ENCODE measurements at regions of chr3 and their contacts with region 1.

Region 1: DNA sequence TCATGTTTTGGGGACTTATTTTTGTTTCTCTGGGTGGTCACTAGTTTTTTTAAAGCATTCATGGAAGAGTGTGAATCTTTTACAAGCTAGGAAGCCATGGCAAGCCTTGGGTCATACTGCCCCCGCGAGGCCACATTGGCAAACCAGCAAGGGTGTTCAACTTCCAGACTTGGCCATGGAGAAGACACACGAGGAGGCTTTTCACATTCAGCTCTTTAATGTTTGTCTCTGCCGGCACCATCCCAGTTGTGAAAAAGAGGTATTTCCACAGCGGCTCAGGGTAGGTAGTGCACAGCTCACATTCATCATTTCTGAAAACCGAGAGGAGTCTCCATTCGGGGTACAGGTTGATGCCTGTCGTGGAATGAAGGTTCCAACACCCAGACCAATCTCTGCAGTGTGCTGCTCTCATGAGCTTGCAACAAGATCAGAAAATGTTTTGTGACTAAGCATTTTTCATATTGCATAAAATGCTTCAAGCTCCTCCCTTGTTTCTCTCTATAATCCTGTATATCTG is 7.7 kb downstream of the CCR5 start:
- DNase-seq: peak; percentile 83
- ATAC-seq: peak; percentile 93
- H3K4me3 ChIP-seq: no peak overlapping the region
- H3K27ac ChIP-seq: no peak overlapping the region
- H3K4me1 ChIP-seq: peaks cover 10% of the 10 kb centered on the region
- H3K27me3 ChIP-seq: no peaks in the 10 kb centered on the region
- CTCF ChIP-seq: peak; percentile 97

Region 2: DNA sequence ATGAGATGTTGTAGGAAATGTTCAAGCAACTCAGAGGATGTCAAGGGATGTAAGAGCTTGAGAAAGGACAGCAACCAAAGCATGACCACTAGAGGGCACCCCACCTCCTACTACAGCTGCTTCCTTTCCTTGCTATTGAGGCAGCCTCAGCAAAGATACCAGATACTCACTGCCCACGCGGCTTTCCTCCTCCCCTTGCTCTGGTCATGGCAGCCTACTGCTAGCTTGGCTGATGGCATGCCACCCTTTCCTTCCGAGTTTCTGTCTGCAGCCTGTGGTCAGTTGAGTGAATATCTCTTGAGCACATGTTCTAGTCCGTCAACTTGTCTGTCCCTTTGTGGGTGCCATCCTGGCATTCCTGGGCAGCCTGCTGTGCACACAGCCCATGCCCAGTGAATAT is 439.6 kb before region 1 on chr3:
- CTCF ChIA-PET with region 1: interaction called, 4 read pairs
- POLR2A ChIA-PET with region 1: no interaction called
- intact Hi-C with region 1: loop called (anchors 2 kb)
- DNase-seq: peak; percentile 89
- ATAC-seq: peak; percentile 84
- H3K4me3 ChIP-seq: no peak overlapping the region
- H3K27ac ChIP-seq: no peak overlapping the region
- H3K4me1 ChIP-seq: peaks cover 14% of the 10 kb centered on the region
- H3K27me3 ChIP-seq: no peaks in the 10 kb centered on the region
- CTCF ChIP-seq: peak; percentile 92

Region 3: GRCh38 chr3:46087871-46088270 is 290.6 kb before region 1 on chr3:
- CTCF ChIA-PET with region 1: interaction called, 7 read pairs
- POLR2A ChIA-PET with region 1: no interaction called
- intact Hi-C with region 1: loop called (anchors 1 kb)
- DNase-seq: peak; percentile 68
- ATAC-seq: peak; percentile 62
- H3K4me3 ChIP-seq: no peak overlapping the region
- H3K27ac ChIP-seq: no peak overlapping the region
- H3K4me1 ChIP-seq: peaks cover 36% of the 10 kb centered on the region
- H3K27me3 ChIP-seq: no peaks in the 10 kb centered on the region
- CTCF ChIP-seq: peak; percentile 69

Region 4: DNA sequence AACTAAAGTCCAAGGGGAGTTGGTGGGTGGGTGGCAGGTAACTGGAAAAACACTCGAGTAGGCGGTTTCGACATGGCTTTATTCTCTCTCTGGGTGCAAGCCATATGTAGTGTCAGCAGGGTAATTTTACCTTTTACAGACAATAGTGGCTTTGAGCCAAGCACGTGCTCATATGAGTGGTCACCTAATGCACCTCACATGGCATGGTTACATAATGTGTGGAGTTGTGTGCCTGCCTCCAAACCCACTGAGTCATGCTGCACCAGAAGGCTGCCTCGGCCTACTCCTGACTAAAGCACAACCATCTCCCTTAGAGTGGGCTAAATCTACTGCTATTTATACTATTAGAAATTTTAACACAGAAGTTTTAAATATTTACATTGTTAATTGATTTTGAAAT is 45.1 kb after region 1 on chr3:
- CTCF ChIA-PET with region 1: interaction called, 3 read pairs
- POLR2A ChIA-PET with region 1: no interaction called
- intact Hi-C with region 1: loop called (anchors 2 kb)
- DNase-seq: peak; percentile 73
- ATAC-seq: no peak
- H3K4me3 ChIP-seq: no peak overlapping the region
- H3K27ac ChIP-seq: peak overlapping the region; percentile 59
- H3K4me1 ChIP-seq: peaks cover 47% of the 10 kb centered on the region
- H3K27me3 ChIP-seq: no peaks in the 10 kb centered on the region
- CTCF ChIP-seq: no peak

Region 5: DNA sequence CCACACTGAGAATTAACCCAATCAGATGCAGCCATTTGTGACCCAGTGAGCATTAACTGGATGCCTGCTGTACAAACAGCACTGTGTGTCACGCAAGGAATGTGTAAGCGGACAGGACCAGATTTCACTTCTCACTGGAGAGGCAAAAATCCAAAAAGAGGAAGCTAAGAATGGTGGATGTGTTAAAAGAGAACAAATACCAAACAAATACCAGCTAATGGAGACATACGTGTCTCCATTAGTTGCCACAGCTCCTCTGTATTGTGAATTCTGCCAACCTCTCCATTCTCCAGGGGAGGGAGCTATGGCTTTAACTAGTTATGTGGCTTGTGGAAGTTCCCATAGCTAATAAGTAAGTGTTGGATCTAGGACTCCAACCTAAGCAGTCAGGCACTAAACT is 83.6 kb after region 1 on chr3:
- CTCF ChIA-PET with region 1: no interaction called
- POLR2A ChIA-PET with region 1: no interaction called
- intact Hi-C with region 1: no loop called
- DNase-seq: peak; percentile 40
- ATAC-seq: peak; percentile 35
- H3K4me3 ChIP-seq: no peak overlapping the region
- H3K27ac ChIP-seq: no peak overlapping the region
- H3K4me1 ChIP-seq: peaks cover 6% of the 10 kb centered on the region; the same call in 1 of the 2 replicates
- H3K27me3 ChIP-seq: no peaks in the 10 kb centered on the region
- CTCF ChIP-seq: peak; percentile 44; the same call in 1 of the 2 replicates